ENCODE measurements at regions of chr1 and their contacts with region 1.

Region 1: GRCh38 chr1:26233903-26234643 is at the start of gene CEP85:
- DNase-seq: peak; percentile 99
- ATAC-seq: peak; percentile 100
- total RNA-seq, gene CEP85: 73.6 TPM

Region 2: GRCh38 chr1:26035959-26036755 is 197.9 kb before region 1 on chr1:
- intact Hi-C with region 1: loop called (anchors 5 kb)
- DNase-seq: peak; percentile 95
- ATAC-seq: peak; percentile 89

Region 3: GRCh38 chr1:26111530-26112406 is 122.3 kb before region 1 on chr1 and contains the start of gene PDIK1L:
- intact Hi-C with region 1: loop called (anchors 2 kb)
- DNase-seq: peak; percentile 96
- ATAC-seq: peak; percentile 94
- total RNA-seq, gene PDIK1L: 4.0 TPM

Region 4: GRCh38 chr1:26169669-26170471 is 64.2 kb before region 1 on chr1 and contains the start of gene ZNF593:
- intact Hi-C with region 1: loop called (anchors 2 kb)
- DNase-seq: peak; percentile 95
- ATAC-seq: peak; percentile 97
- total RNA-seq, gene ZNF593: 14.9 TPM

Region 5: GRCh38 chr1:26203642-26204318 is 30.3 kb before region 1 on chr1:
- intact Hi-C with region 1: no loop called
- DNase-seq: no peak
- ATAC-seq: no peak

Region 6: GRCh38 chr1:26254404-26254803 is 20.3 kb after region 1 on chr1:
- intact Hi-C with region 1: loop called (anchors 2 kb)
- DNase-seq: no peak
- ATAC-seq: peak; percentile 85

Region 7: DNA sequence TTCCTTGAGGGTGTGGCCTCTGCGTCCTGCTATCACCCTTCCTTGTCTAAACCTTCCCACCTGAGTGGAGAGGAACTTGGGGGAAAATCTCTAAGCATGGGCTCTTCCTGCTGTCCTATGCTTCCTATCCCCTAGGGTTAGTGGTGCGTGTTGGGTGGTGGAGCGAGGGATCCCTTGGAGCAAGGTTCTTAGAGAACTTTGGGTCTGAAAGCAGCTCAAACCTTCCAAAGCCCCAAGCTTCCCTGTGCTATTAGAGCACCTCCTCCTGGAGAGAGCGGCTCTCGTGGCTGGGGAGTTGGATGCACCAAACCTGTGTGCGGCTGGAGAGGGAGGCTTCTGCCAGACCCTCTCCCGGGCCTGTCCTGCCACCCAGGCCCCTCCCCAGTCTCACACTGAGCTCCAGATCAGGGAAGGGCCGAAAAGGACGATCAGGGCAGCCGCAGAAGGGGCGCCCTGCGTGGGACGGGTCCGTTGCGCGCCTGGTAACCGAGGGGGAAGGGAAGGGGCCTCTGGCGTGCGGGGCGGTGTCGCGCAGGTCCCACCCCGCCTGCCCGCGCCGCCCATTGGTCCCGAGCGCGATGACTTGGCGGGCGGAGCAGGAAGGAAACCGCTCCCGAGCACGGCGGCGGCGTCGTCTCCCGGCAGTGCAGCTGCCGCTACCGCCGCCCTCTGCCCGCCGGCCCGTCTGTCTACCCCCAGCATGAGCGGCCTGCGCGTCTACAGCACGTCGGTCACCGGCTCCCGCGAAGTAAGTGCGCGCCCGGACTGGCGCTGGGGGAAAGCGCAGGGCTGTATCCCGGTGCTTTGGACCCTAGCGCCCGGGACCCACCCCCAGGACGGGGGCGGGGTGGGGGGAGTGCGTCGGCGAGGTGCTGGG is 45.6 kb after region 1 on chr1 and contains the start of gene SH3BGRL3:
- intact Hi-C with region 1: loop called (anchors 5 kb)
- DNase-seq: peak; percentile 96
- ATAC-seq: peak; percentile 77
- total RNA-seq, gene SH3BGRL3: 50.5 TPM

Region 8: GRCh38 chr1:26321315-26322041 is 87.4 kb after region 1 on chr1:
- intact Hi-C with region 1: loop called (anchors 1 kb)
- DNase-seq: peak; percentile 97
- ATAC-seq: peak; percentile 93